Left lung (tissue), 14 donors: ENCODE measurements at regions of chr18 and their contacts with region 1.

Region 1: GRCh38 chr18:55781481-55781957 is 193.5 kb upstream of the TCF4 start:
- DNase-seq: peak in 2 of 4 donors; percentile 49 to 72
- ATAC-seq: peak; percentile 55
- H3K4me3 ChIP-seq: no peak overlapping the region
- H3K27ac ChIP-seq: peak overlapping the region in 1 of 2 donors; percentile 72
- H3K4me1 ChIP-seq: peaks cover 0 to 20% of the 10 kb centered on the region in 2 donors
- H3K27me3 ChIP-seq: peaks cover 0 to 31% of the 10 kb centered on the region in 2 donors
- CTCF ChIP-seq: peak; percentile 31 to 40

Region 2: DNA sequence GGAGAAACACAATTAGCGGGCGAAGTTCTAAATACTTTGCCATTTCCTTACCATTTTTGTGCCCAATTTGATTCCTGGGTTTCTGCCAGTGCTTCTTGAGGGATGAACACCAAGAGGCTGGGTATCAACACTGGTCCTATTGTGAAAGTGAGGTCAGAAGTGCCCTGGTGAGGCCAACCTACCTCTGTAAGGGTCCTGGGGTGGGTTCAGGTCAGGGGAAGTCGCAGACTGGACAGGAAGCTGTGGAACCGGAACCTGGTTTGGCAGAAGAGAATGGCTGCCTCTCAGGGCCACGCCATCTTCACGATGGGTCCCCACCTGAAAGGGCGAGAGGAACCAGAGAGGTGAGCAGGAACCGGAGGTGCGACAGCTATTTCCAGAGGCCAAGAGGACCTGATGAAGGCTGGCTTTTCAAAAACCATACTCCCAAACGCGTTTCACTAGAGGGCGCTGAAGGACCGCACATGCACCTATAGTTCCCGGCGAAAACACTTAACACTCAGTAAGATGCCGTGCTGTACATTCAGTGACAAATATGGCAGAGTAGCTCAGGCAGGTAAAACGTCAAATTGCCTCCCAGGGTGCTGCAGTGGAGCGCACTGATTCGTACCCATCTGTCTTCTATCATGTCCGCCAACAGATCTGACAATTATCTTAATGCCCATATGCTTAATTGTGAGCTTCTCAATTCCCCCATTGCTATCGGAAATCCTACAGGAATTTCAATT is 547.0 kb before region 1 on chr18:
- intact Hi-C with region 1: loop called in 1 of 2 experiments (anchors 10 kb)
- DNase-seq: peak; percentile 60 to 85 (median 71)
- ATAC-seq: peak; percentile 97
- H3K4me3 ChIP-seq: no peak overlapping the region
- H3K27ac ChIP-seq: peak overlapping the region in 1 of 2 donors; percentile 0
- H3K4me1 ChIP-seq: peaks cover 5 to 16% of the 10 kb centered on the region in 2 donors
- H3K27me3 ChIP-seq: no peaks in the 10 kb centered on the region
- CTCF ChIP-seq: peak; percentile 56 to 68

Region 3: GRCh38 chr18:56468396-56468795 is 686.9 kb after region 1 on chr18:
- intact Hi-C with region 1: loop called in 1 of 2 experiments (anchors 5 kb)
- DNase-seq: no peak
- ATAC-seq: peak; percentile 71
- H3K4me3 ChIP-seq: no peak overlapping the region
- H3K27ac ChIP-seq: peak overlapping the region in 1 of 2 donors; percentile 73
- H3K4me1 ChIP-seq: peaks cover 0 to 8% of the 10 kb centered on the region in 2 donors
- H3K27me3 ChIP-seq: no peaks in the 10 kb centered on the region
- CTCF ChIP-seq: no peak